ENCODE measurements at regions of chr1 and their contacts with region 1.

Region 1: GRCh38 chr1:43529206-43529731 is 1.4 kb upstream of the PTPRF start:
- DNase-seq: peak; percentile 53 to 82 (median 75)
- ATAC-seq: peak; percentile 76
- H3K4me3 ChIP-seq: no peak overlapping the region
- H3K4me3 Mint-ChIP-seq: peak overlapping the region; percentile 16 to 97 (median 54)
- H3K27ac ChIP-seq: no peak overlapping the region
- H3K27ac Mint-ChIP-seq: peak overlapping the region in 1 of 9 donors; percentile 69
- H3K4me1 ChIP-seq: peaks cover 0 to 3% of the 10 kb centered on the region in 2 donors
- H3K4me1 Mint-ChIP-seq: peaks cover 16 to 27% (median 22%) of the 10 kb centered on the region in 7 donors
- H3K27me3 ChIP-seq: peaks cover 8 to 9% of the 10 kb centered on the region in 2 donors
- H3K27me3 Mint-ChIP-seq: peaks cover 43 to 57% (median 49%) of the 10 kb centered on the region in 5 donors

Region 2: GRCh38 chr1:43227143-43227764 is 302.0 kb before region 1 on chr1:
- CTCF ChIA-PET with region 1: no interaction called
- POLR2A ChIA-PET with region 1: no interaction called
- intact Hi-C with region 1: loop called (anchors 1 to 5 kb)
- DNase-seq: peak; percentile 50 to 86 (median 76)
- ATAC-seq: peak; percentile 94
- H3K4me3 ChIP-seq: no peak overlapping the region
- H3K4me3 Mint-ChIP-seq: no peak overlapping the region
- H3K27ac ChIP-seq: no peak overlapping the region
- H3K27ac Mint-ChIP-seq: peak overlapping the region in 3 of 9 donors; percentile 20 to 41 (median 33)
- H3K4me1 ChIP-seq: no peaks in the 10 kb centered on the region
- H3K4me1 Mint-ChIP-seq: peaks cover 0 to 8% (median 0%) of the 10 kb centered on the region in 7 donors
- H3K27me3 ChIP-seq: no peaks in the 10 kb centered on the region
- H3K27me3 Mint-ChIP-seq: peaks cover 0 to 17% (median 0%) of the 10 kb centered on the region in 5 donors

Region 3: DNA sequence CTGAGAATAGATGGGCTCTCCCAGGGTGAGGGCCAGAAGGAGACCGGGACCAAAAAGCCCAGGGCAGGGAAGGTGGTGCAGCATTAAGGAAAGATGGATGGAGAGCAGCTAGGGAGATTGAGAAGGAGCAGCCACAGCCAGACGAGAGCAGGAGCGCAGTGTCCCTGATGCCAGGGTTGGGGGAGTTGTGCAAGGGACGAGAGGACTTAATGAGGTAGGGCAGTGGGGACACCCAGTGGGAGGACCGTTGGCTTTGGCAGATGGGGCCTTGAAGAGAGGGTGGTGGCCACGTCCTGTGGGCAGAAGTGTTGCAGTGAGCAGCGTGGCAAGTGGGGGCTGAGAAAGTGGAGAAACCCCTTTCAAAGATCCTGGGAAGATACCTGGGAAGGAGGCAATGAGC is 82.7 kb after region 1 on chr1:
- CTCF ChIA-PET with region 1: no interaction called
- POLR2A ChIA-PET with region 1: no interaction called
- intact Hi-C with region 1: no loop called
- DNase-seq: no peak
- ATAC-seq: no peak
- H3K4me3 ChIP-seq: no peak overlapping the region
- H3K4me3 Mint-ChIP-seq: no peak overlapping the region
- H3K27ac ChIP-seq: no peak overlapping the region
- H3K27ac Mint-ChIP-seq: no peak overlapping the region
- H3K4me1 ChIP-seq: no peaks in the 10 kb centered on the region
- H3K4me1 Mint-ChIP-seq: peaks cover 0 to 5% (median 0%) of the 10 kb centered on the region in 7 donors
- H3K27me3 ChIP-seq: no peaks in the 10 kb centered on the region
- H3K27me3 Mint-ChIP-seq: no peaks in the 10 kb centered on the region

Region 4: GRCh38 chr1:43706598-43707495 is 177.6 kb after region 1 on chr1:
- CTCF ChIA-PET with region 1: no interaction called
- POLR2A ChIA-PET with region 1: interaction called, 3 read pairs
- intact Hi-C with region 1: loop called in 1 of 2 experiments (anchors 2 kb)
- DNase-seq: peak; percentile 84 to 94 (median 89)
- ATAC-seq: peak; percentile 98
- H3K4me3 ChIP-seq: peak overlapping the region; percentile 92
- H3K4me3 Mint-ChIP-seq: peak overlapping the region; percentile 82 to 90 (median 88)
- H3K27ac ChIP-seq: peak overlapping the region; percentile 79
- H3K27ac Mint-ChIP-seq: peak overlapping the region in 7 of 9 donors; percentile 32 to 87 (median 79)
- H3K4me1 ChIP-seq: peaks cover 7 to 10% of the 10 kb centered on the region in 2 donors
- H3K4me1 Mint-ChIP-seq: peaks cover 7 to 46% (median 27%) of the 10 kb centered on the region in 7 donors
- H3K27me3 ChIP-seq: no peaks in the 10 kb centered on the region
- H3K27me3 Mint-ChIP-seq: no peaks in the 10 kb centered on the region

Region 5: DNA sequence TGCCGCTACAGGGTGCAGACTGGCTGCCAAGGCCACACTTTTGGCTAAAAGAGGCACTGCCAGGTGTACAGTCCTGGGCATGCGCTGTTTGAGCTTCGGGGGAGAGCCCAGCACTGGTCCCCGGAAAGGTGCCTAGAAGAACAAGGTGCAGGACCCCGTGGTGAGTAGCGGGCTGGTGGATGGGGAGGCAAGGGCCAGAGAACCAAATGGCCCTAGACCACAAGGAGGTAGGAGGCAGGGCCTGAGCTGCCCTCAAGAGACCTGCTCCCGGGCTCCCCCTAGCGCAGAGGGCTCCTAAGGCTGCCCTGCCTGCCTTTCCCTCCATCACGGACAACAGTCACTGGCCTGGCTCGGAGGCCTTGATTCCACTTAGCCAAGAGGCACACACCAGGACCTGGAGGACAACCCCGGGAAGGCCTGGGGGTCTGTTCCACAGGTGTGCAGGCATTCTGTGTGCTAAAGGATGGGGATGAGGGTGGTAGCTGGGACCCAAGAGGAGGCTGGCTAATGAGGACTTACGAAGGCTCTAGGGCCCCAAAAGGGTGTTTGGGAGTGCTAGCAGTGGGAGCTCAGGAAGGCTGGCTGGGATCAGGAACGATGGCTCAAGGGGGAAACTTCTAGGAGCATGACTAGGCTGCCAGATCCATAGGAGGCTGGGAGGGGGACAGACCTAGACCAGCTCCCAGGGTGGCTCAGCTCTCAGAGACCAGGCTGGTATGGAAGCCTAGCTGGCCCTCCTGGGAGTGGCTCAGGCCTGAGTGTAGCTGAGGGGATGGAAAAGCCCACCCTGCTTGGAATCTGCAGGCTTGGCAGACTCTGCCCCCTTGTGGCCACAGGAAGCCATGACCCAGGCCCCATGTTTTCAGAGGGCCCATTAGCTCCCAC is 405.1 kb after region 1 on chr1:
- CTCF ChIA-PET with region 1: interaction called, 9 read pairs
- POLR2A ChIA-PET with region 1: no interaction called
- intact Hi-C with region 1: loop called in 1 of 2 experiments (anchors 1 kb)
- DNase-seq: peak in 6 of 9 donors; percentile 29 to 68 (median 44)
- ATAC-seq: peak; percentile 82
- H3K4me3 ChIP-seq: no peak overlapping the region
- H3K4me3 Mint-ChIP-seq: peak overlapping the region in 8 of 10 donors; percentile 12 to 70 (median 46)
- H3K27ac ChIP-seq: no peak overlapping the region
- H3K27ac Mint-ChIP-seq: no peak overlapping the region
- H3K4me1 ChIP-seq: peaks cover 0 to 9% of the 10 kb centered on the region in 2 donors
- H3K4me1 Mint-ChIP-seq: peaks cover 10 to 29% (median 14%) of the 10 kb centered on the region in 7 donors
- H3K27me3 ChIP-seq: peaks cover 9 to 19% of the 10 kb centered on the region in 2 donors
- H3K27me3 Mint-ChIP-seq: peaks cover 21 to 29% (median 26%) of the 10 kb centered on the region in 5 donors

Region 6: DNA sequence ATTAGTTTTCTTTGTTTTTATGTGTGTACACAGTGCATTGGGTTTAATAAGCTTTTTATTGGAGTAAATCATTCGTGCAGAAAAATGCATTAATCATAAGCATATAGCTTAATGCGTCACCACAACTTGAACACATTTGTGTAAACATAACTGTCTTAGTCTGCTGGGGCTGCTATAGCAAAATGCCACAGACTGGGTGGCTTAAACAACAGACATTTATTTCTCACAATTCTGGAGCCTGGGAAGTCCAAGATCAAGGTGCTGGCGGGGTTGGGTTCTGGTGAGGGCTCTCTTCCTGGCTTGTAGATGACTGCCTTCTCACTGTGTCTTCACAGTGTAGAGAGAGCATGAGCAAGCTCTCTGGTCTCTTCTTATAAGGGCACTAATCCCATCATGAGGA is 519.5 kb after region 1 on chr1:
- CTCF ChIA-PET with region 1: interaction called, 5 read pairs
- POLR2A ChIA-PET with region 1: no interaction called
- intact Hi-C with region 1: loop called in 1 of 2 experiments (anchors 1 kb)
- DNase-seq: no peak
- ATAC-seq: no peak
- H3K4me3 ChIP-seq: no peak overlapping the region
- H3K4me3 Mint-ChIP-seq: no peak overlapping the region
- H3K27ac ChIP-seq: no peak overlapping the region
- H3K27ac Mint-ChIP-seq: no peak overlapping the region
- H3K4me1 ChIP-seq: no peaks in the 10 kb centered on the region
- H3K4me1 Mint-ChIP-seq: peaks cover 0 to 14% (median 5%) of the 10 kb centered on the region in 7 donors
- H3K27me3 ChIP-seq: no peaks in the 10 kb centered on the region
- H3K27me3 Mint-ChIP-seq: peaks cover 2 to 20% (median 8%) of the 10 kb centered on the region in 5 donors

Measured in naive thymus-derived CD4-positive, alpha-beta T cell (primary cell).